ENCODE measurements at regions of chr2 and their contacts with region 1.

Region 1: DNA sequence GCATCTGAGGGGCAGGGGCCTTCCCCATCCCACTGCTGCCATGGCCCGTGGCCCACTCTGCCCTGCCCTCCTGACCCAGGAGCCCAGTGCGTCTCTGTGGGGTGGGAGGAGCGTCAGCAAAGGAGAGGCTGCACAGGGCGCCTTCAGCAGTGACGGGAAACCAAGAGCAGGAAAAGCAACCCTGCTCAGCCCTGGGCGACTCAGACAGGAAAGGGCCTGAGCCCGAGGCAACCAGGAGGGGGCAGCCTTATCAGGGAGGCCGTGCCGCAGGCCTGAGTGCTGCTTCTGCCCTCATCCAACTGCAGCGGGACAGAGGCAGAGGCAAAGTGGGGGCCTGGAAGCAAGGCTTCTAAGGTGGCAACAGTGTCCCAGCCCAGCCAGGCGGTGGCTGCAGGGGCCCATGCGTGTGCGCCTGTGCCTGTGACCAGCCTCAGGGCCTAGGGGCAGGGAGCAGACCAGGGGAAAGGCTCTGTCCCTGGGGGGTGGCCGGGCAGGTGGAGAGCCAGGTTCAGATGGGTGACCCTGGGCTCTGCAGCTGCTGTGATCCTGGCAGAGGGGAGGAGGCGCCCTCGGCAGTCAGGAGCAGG is 23.3 kb upstream of the ALPI start:
- DNase-seq: no peak
- ATAC-seq: no peak
- H3K4me3 ChIP-seq: no peak overlapping the region
- H3K27ac ChIP-seq: no peak overlapping the region
- H3K4me1 ChIP-seq: no peaks in the 10 kb centered on the region
- H3K27me3 ChIP-seq: no peaks in the 10 kb centered on the region
- CTCF ChIP-seq: no peak

Region 2: GRCh38 chr2:232339121-232340081 is 93.3 kb before region 1 on chr2:
- intact Hi-C with region 1: loop called (anchors 5 to 10 kb)
- DNase-seq: peak in 1 of 2 donors; percentile 43
- ATAC-seq: no peak
- H3K4me3 ChIP-seq: no peak overlapping the region
- H3K27ac ChIP-seq: no peak overlapping the region
- H3K4me1 ChIP-seq: no peaks in the 10 kb centered on the region
- H3K27me3 ChIP-seq: peaks cover 0 to 6% (median 0%) of the 10 kb centered on the region in 3 donors
- CTCF ChIP-seq: no peak

Region 3: DNA sequence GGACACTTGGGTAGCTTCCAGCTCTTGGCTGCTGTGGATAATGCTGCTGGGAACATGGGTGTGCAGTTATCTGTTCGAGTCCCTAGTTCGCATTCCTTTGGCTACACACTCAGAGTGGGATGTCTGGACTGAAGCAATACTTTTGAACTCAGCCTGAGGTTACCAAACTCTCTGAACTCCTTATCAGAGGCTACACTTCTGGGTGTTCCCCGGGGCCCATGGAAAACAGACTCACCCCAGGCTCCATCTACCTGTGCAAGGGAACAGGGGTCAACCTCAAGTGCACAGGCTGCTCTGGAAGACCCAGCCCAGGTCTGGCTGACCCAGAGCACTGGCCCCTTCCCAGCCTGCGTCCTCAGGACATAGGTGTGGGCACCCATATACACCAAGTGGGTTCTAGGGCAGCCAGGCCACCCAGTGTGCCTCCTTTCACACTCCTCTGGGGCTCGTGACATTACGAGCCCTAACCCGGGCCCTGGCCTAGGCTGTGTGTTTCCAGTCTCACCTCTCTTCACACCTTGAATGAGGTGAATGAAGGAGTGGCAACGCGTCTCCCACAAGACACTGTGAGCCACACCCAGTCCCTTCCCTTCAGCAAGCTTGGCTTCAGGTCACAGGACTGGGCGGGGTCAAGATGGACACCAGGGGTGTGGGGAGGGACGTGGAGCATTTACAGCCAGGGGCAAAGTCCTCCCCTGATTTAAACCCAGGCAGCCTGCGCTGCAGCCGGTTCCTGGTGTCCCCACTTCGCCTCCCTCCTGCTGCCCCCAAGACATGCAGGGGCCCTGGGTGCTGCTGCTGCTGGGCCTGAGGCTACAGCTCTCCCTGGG is 22.9 kb after region 1 on chr2 and contains the start of gene ALPI:
- intact Hi-C with region 1: no loop called
- DNase-seq: peak in 1 of 2 donors; percentile 36
- ATAC-seq: no peak
- H3K4me3 ChIP-seq: no peak within 1 kb of the TSS
- H3K27ac ChIP-seq: no peak within 1 kb of the TSS
- H3K4me1 ChIP-seq: no peaks in the 10 kb centered on the region
- H3K27me3 ChIP-seq: peaks cover 0 to 16% (median 0%) of the 10 kb centered on the region in 3 donors
- CTCF ChIP-seq: no peak
- total RNA-seq, gene ALPI: not detected